ENCODE measurements at regions of chr2 and their contacts with region 1.

Region 1: DNA sequence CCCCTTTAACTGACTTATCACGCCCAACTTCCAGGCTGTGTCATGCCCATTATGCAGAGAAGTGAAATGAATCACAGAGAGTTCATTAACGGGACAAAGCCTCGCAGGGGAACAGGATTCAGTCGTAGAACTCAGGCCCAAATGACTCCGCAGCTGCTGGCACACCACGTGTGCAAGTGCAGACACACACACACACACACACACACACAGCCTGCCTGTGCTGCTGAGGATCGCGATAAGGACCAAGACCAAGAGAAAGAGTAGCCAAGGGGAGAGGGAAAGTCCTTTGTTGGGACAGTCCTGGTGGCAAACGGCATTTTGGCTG is 90.0 kb upstream of the TAF1B start:
- DNase-seq: peak; percentile 51
- H3K4me3 Mint-ChIP-seq: peak overlapping the region; percentile 75
- H3K27ac Mint-ChIP-seq: peak overlapping the region; percentile 94
- H3K4me1 Mint-ChIP-seq: peaks cover 65% of the 10 kb centered on the region
- H3K27me3 Mint-ChIP-seq: peaks cover 16% of the 10 kb centered on the region

Region 2: GRCh38 chr2:9738535-9739496 is 14.4 kb before region 1 on chr2:
- CTCF ChIA-PET with region 1: interaction called, 17 read pairs
- POLR2A ChIA-PET with region 1: no interaction called
- DNase-seq: no peak
- H3K4me3 Mint-ChIP-seq: peak overlapping the region; percentile 70
- H3K27ac Mint-ChIP-seq: peak overlapping the region; percentile 98
- H3K4me1 Mint-ChIP-seq: peaks cover 59% of the 10 kb centered on the region
- H3K27me3 Mint-ChIP-seq: peaks cover 3% of the 10 kb centered on the region